HepG2 (cell line): ENCODE measurements at regions of chr6 and their contacts with region 1.

Region 1: GRCh38 chr6:63347599-63347998 is 27.8 kb upstream of the LGSN start:
- DNase-seq: peak; percentile 48
- ATAC-seq: no peak
- H3K4me3 ChIP-seq: no peak overlapping the region
- H3K27ac ChIP-seq: no peak overlapping the region
- H3K4me1 ChIP-seq: peaks cover 38% of the 10 kb centered on the region
- H3K27me3 ChIP-seq: no peaks in the 10 kb centered on the region
- CTCF ChIP-seq: no peak
- EP300 ChIP-seq: peak in 1 of 2 experiments; percentile 41; a peak in 1 of 4 replicates
- POLR2A ChIP-seq: no peak
- RAD21 ChIP-seq: no peak

Region 2: DNA sequence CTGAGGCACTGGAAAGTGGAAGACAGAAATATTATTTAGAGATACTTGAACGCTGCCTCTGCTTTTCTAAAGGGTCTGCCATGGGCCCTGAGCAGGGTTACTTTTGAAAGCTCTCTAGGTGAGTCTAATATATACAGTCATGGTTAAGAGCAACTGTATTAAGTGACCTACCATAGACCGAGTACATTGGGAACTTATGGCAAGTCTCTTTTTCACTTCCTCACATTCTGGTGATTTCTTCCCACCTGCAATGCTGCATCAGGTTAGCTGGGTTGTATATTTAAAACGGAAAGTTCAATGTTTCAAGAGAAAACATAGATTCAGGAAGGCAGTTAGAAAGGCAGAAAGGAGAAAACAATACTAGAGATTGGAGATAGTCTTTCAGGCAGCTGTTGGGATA is 442.7 kb after region 1 on chr6:
- CTCF ChIA-PET with region 1: no interaction called
- POLR2A ChIA-PET with region 1: no interaction called
- in situ Hi-C with region 1: loop called (anchors 10 kb)
- intact Hi-C with region 1: no loop called
- DNase-seq: no peak
- ATAC-seq: no peak
- H3K4me3 ChIP-seq: no peak overlapping the region
- H3K27ac ChIP-seq: no peak overlapping the region
- H3K4me1 ChIP-seq: peaks cover 8% of the 10 kb centered on the region
- H3K27me3 ChIP-seq: no peaks in the 10 kb centered on the region
- CTCF ChIP-seq: no peak
- EP300 ChIP-seq: no peak
- POLR2A ChIP-seq: no peak
- RAD21 ChIP-seq: no peak